ENCODE measurements at regions of chr12 and their contacts with region 1.

Region 1: DNA sequence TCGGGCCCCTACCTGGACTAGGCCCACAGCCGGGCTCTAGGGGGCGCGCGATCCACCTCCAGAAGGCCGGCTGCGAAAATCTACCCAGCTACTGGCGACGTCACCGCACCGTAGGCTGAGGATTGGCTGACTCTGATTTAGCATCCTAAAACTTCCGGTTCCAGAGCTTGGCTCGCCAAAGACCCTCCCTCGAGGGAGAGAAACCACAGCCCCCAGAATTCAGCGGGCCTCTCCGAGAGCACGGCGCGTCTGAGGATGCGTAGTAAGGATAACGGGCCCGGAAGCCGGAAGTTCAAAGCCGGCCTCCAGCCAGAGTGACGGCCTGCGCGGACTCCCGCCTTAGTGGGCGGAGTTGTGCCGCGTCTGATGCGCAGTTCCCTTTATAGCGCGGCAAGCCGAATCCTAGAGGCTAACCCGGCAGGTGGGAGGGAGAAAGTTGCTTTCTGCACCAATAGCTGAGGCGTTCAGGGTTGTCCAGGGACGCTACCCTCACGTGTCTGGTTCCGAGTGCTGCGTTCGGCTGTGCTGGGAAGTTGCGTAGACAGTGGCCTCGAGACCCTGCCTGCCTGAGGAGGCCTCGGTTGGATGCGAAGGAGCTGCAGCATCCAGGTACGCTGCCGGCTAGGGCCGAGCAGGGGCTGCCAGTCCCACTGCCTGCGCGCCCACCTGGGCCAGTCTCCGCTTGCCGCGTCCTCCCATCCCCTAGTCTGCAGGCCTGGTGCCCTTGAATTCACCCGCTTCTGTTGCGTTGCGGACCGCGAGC is at the start of gene COX14:
- DNase-seq: peak; percentile 100
- H3K4me3 ChIP-seq: peak within 1 kb of the TSS; percentile 74
- H3K27ac ChIP-seq: peak within 1 kb of the TSS; percentile 89
- H3K4me1 ChIP-seq: peaks cover 26% of the 10 kb centered on the region
- H3K27me3 ChIP-seq: no peaks in the 10 kb centered on the region
- CTCF ChIP-seq: peak; percentile 99
- total RNA-seq, gene COX14: 25.4 and 28.7 TPM in 2 replicates

Region 2: GRCh38 chr12:49740930-49741881 is 370.7 kb before region 1 on chr12 and contains the start of gene TMBIM6:
- CTCF ChIA-PET with region 1: no interaction called
- POLR2A ChIA-PET with region 1: interaction called, 22 read pairs
- intact Hi-C with region 1: no loop called
- DNase-seq: peak; percentile 100
- H3K4me3 ChIP-seq: peak within 1 kb of the TSS; percentile 91
- H3K27ac ChIP-seq: peak within 1 kb of the TSS; percentile 95
- H3K4me1 ChIP-seq: peaks cover 14% of the 10 kb centered on the region
- H3K27me3 ChIP-seq: no peaks in the 10 kb centered on the region
- CTCF ChIP-seq: peak; percentile 98
- total RNA-seq, gene TMBIM6: 425 and 454 TPM in 2 replicates

Region 3: GRCh38 chr12:50101663-50102062 is 10.2 kb before region 1 on chr12:
- CTCF ChIA-PET with region 1: interaction called, 21 read pairs
- POLR2A ChIA-PET with region 1: no interaction called
- intact Hi-C with region 1: no loop called
- DNase-seq: peak; percentile 73
- H3K4me3 ChIP-seq: no peak overlapping the region
- H3K27ac ChIP-seq: no peak overlapping the region
- H3K4me1 ChIP-seq: peaks cover 8% of the 10 kb centered on the region
- H3K27me3 ChIP-seq: no peaks in the 10 kb centered on the region
- CTCF ChIP-seq: peak; percentile 60

Region 4: GRCh38 chr12:50167041-50167828 is 55.4 kb after region 1 on chr12 and contains the start of gene CERS5:
- CTCF ChIA-PET with region 1: interaction called, 8 read pairs
- POLR2A ChIA-PET with region 1: no interaction called
- intact Hi-C with region 1: loop called (anchors 2 kb)
- DNase-seq: peak; percentile 100
- H3K4me3 ChIP-seq: peak within 1 kb of the TSS; percentile 70
- H3K27ac ChIP-seq: peak within 1 kb of the TSS; percentile 91
- H3K4me1 ChIP-seq: no peaks in the 10 kb centered on the region
- H3K27me3 ChIP-seq: no peaks in the 10 kb centered on the region
- CTCF ChIP-seq: no peak
- total RNA-seq, gene CERS5: 57.0 and 63.7 TPM in 2 replicates

Measured in A673 (cell line).